Colonic mucosa (tissue), 4 donors: ENCODE measurements at regions of chr14 and their contacts with region 1.

Region 1: DNA sequence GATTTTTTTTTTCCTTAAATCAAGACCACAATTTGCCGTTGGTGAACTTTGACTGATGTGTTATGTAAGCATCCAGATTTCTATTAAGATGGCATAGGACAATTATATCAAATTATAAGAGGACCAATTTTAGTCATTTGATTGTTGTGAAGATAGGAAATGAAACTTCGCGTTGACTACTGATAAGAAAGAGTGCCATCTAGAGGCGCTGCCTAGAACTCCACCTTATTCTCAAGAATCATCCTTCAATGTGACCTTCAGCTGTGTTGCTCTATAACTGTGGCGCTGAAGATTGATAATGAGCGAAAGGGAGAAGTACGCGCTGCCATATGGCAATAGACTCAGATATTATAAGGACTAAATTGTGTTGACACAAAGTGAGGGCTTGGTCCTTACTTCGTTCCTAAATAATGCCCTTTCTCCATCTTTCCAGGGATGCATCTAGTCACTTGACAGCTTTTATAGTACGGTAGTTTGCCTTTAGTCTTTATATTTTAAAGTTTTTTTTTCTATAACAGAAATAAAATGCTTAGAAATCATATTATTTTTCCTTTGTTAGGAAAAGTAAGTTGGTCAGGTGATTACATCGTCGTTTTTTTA is 350.8 kb upstream of the STXBP6 start:
- DNase-seq: peak; percentile 75
- H3K4me3 ChIP-seq: no peak overlapping the region
- H3K27ac ChIP-seq: no peak overlapping the region
- H3K4me1 ChIP-seq: no peaks in the 10 kb centered on the region
- H3K27me3 ChIP-seq: no peaks in the 10 kb centered on the region
- CTCF ChIP-seq: peak; percentile 69

Region 2: DNA sequence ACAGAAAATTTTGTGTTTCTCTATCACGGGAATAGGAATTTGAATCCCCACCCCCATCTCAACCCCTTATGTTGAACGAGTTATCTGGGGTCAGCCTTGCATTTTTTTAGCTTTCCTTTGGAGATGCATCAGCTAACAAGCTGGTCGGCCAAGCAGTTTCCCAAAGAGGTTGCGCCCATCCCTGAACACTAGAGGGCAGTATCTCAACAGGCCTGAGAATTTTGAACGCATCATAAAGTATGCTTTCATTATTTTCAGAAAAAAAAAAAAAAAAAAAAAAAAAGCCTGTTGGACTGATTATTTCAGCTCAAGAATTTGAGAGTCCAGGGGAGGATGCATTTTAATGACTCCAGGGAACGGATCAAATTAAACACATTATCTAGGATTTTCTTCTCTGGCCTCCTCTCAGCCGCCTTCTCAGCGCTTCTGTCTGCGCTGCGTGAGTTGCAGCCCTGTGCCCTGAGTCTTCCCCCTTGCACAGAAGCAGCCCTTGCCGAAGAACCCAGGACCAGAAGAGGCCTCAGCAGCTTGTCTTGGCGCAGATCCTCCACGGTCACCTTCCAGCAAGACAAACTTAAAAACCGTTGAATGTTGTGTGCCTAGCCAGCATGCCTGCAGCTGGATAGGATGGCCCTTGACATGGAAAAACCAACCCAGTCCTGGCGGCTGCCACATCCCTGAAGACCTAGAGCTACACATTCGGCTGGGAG is 690.1 kb before region 1 on chr14:
- intact Hi-C with region 1: loop called (anchors 5 kb)
- DNase-seq: peak; percentile 59
- H3K4me3 ChIP-seq: no peak overlapping the region
- H3K27ac ChIP-seq: no peak overlapping the region
- H3K4me1 ChIP-seq: no peaks in the 10 kb centered on the region
- H3K27me3 ChIP-seq: no peaks in the 10 kb centered on the region
- CTCF ChIP-seq: peak; percentile 88

Region 3: DNA sequence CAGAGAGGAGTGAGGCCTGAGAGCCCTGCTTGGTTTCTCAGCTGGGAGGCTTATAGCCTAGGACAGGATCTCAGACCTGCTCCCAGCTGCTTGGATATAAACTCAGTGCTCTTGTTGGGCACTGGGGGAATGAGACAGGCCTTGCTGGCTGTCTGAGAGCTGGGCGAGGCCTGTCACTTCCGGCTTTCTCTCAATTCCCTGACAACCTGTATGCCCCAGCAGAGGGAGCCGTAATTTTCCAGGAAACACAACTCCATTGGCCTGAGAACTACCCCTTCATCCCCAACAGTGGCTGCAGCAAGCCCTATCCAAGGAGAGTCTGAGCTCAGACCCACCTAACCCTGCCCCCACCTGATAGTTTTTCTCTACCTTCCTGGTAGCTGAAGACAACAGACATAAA is 92.5 kb before region 1 on chr14:
- intact Hi-C with region 1: loop called (anchors 5 kb)
- DNase-seq: peak; percentile 51
- H3K4me3 ChIP-seq: no peak overlapping the region
- H3K27ac ChIP-seq: no peak overlapping the region
- H3K4me1 ChIP-seq: no peaks in the 10 kb centered on the region
- H3K27me3 ChIP-seq: no peaks in the 10 kb centered on the region
- CTCF ChIP-seq: no peak

Region 4: GRCh38 chr14:25522116-25522515 is 121.4 kb after region 1 on chr14:
- intact Hi-C with region 1: no loop called
- DNase-seq: no peak
- H3K4me3 ChIP-seq: no peak overlapping the region
- H3K27ac ChIP-seq: no peak overlapping the region
- H3K4me1 ChIP-seq: no peaks in the 10 kb centered on the region
- H3K27me3 ChIP-seq: no peaks in the 10 kb centered on the region
- CTCF ChIP-seq: no peak

Region 5: GRCh38 chr14:25607192-25607591 is 206.5 kb after region 1 on chr14:
- intact Hi-C with region 1: no loop called
- DNase-seq: no peak
- H3K4me3 ChIP-seq: no peak overlapping the region
- H3K27ac ChIP-seq: no peak overlapping the region
- H3K4me1 ChIP-seq: no peaks in the 10 kb centered on the region
- H3K27me3 ChIP-seq: no peaks in the 10 kb centered on the region
- CTCF ChIP-seq: no peak